HEK293T (cell line): ENCODE measurements at regions of chr16 and their contacts with region 1.

Region 1: DNA sequence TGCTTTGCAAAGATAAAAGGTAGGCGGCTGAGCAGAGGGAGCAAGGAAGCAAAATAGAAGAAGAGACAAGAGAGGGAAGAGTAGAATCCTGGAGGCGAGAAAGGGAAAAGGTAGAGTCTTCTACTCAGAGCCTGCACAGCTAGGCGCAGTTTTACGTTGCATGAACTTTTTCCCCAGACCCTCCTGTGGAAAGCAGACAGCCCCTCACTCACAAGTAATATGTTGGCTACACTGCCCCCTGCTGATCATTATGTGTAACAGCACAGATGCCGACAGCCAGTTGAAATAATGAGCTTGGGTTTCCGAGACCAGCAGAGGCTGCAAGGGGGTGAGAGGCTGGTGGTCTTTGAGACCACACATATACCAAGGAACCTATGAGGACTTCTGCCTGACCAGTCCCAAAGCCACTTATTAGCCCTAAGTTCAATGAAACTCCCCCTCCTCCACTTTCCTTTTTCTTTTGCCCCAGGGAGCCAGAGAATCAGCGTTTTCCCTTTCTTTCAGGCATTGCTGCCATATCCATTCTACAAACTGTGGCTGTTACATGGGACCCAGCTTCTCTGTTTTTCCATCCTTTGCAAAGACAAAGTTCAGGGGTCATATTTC is 22.5 kb upstream of the CMTR2 start:
- DNase-seq: peak; percentile 51

Region 2: DNA sequence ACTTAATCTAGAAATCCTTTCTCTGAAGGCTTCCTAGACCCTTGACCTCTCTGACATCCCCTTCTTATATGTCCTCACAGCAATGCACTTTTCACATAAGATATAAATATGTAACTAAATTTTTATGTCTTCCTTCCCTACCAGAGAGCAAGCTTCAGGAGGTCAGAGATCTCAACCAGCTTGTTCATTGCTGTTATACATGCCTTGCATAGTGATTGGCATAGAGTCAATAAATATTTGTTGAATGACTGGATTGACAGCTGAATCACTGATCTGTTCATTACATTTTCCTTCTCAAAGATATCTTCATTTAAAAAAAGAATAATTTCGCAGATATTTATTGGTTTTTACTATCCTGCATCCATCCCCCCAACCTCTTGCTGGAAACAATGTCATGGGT is 110.6 kb before region 1 on chr16:
- CTCF ChIA-PET with region 1: no interaction called
- POLR2A ChIA-PET with region 1: no interaction called
- DNase-seq: no peak

Region 3: DNA sequence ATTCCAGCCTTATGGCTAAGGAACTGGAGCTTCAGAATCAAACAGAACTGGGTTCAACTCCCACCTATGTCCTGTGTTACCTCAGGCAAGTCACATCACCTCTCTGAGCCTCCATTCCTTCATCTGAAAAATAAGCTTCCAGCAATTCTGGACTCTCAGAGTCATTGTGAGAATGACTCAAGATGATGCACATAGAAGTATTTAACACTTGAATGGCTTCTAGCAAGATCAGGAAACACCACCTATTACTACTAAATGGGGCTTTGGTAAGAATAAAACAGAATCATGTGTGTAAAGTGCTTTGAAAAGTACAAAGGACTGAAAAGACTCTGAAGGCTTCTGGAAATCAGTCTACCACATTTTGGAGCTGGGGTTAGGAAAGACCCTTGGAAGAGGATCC is 16.1 kb after region 1 on chr16:
- CTCF ChIA-PET with region 1: interaction called, 12 read pairs
- POLR2A ChIA-PET with region 1: no interaction called
- DNase-seq: no peak